ENCODE measurements at regions of chr1 and their contacts with region 1.

Region 1: DNA sequence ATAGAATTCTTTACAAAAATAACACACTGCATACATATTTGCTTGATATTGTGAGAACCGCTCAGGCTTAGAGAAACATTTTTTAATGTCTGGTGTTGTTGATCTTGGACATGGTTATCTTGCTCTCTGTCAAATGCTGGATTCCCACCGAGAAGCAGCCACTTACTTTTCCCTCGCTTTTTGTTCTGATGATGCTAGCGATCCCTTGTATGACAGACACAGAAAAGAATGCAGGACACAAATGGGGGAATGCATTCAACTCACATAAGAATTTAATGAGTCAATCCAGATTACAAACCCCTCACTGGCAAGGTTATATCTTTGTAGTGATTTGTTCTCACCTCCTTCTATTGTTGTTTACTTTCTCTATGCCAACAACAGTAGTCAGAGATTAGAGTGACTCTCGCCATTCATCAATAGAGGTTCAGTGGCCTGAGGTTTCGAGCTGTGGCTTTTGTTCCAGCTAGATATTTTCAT is 76.8 kb upstream of the AKT3 start:
- DNase-seq: peak; percentile 96
- ATAC-seq: peak; percentile 74
- H3K4me3 ChIP-seq: no peak overlapping the region
- H3K27ac ChIP-seq: no peak overlapping the region
- H3K4me1 ChIP-seq: peaks cover 14% of the 10 kb centered on the region
- H3K27me3 ChIP-seq: peaks cover 17% of the 10 kb centered on the region
- CTCF ChIP-seq: no peak
- POLR2A ChIP-seq: no peak
- RAD21 ChIP-seq: no peak

Region 2: DNA sequence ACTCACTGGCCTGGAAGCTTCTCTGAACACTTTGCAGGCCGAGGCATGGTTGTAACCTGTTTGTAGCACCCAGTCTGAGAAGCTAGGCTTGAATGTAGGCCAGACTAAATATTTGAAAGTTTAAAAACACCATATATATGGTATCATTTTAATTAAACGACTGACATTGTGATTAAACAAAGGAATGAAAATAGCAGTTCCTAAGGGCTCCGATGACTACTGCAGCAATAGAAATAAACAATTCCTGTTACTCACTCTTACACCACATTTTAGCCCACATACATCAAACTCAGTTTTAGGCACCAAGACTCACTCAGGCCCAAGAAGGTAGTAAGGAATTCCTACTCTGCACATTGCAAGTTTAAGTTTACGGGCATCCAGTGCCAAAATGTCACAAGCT is 358.0 kb before region 1 on chr1:
- CTCF ChIA-PET with region 1: no interaction called
- POLR2A ChIA-PET with region 1: interaction called, 26 read pairs
- dilution Hi-C with region 1: no loop called
- in situ Hi-C with region 1: no loop called
- intact Hi-C with region 1: no loop called
- DNase-seq: peak; percentile 90
- ATAC-seq: peak; percentile 96
- H3K4me3 ChIP-seq: no peak overlapping the region
- H3K27ac ChIP-seq: no peak overlapping the region
- H3K4me1 ChIP-seq: 0 out of 2 replicates have a peak, but pooled peaks cover 2% of the 10 kb centered on the region
- H3K27me3 ChIP-seq: no peaks in the 10 kb centered on the region
- CTCF ChIP-seq: no peak
- POLR2A ChIP-seq: no peak
- RAD21 ChIP-seq: no peak

Region 3: DNA sequence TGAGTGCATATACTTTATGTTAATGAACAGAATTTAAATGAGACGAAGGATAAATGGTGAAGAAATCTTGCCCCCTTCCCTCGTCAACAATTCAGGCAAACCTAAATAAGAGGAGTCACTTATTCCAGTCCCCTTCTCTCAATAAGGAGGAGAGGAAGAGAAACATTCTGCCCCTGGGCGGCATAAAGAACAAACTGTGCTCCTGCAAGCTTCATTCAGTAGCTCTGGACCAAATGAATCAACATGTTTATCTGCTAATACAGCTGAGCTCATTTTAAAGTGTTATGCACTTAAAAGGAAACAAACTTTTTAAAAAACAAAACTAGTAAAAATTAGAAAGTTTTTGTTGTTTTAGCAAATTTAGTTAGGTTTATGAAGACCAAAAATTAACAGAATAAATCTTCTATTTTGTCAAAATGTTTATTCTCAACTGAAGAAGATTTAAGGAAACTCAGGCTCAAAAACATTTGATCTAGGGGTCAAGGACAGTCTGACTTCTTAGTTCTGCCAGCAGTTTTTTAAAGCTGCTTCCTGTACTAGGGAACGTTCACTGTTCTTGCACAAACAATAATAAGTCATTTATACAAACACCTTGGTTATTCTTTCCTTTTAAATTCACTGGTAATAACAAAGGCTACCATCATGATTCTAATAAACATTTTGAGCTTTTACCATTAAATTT is 135.1 kb before region 1 on chr1:
- CTCF ChIA-PET with region 1: no interaction called
- POLR2A ChIA-PET with region 1: no interaction called
- dilution Hi-C with region 1: no loop called
- in situ Hi-C with region 1: no loop called
- intact Hi-C with region 1: no loop called
- DNase-seq: no peak
- ATAC-seq: no peak
- H3K4me3 ChIP-seq: no peak overlapping the region
- H3K27ac ChIP-seq: no peak overlapping the region
- H3K4me1 ChIP-seq: peaks cover 5% of the 10 kb centered on the region
- H3K27me3 ChIP-seq: no peaks in the 10 kb centered on the region
- CTCF ChIP-seq: no peak
- POLR2A ChIP-seq: no peak
- RAD21 ChIP-seq: no peak

Region 4: DNA sequence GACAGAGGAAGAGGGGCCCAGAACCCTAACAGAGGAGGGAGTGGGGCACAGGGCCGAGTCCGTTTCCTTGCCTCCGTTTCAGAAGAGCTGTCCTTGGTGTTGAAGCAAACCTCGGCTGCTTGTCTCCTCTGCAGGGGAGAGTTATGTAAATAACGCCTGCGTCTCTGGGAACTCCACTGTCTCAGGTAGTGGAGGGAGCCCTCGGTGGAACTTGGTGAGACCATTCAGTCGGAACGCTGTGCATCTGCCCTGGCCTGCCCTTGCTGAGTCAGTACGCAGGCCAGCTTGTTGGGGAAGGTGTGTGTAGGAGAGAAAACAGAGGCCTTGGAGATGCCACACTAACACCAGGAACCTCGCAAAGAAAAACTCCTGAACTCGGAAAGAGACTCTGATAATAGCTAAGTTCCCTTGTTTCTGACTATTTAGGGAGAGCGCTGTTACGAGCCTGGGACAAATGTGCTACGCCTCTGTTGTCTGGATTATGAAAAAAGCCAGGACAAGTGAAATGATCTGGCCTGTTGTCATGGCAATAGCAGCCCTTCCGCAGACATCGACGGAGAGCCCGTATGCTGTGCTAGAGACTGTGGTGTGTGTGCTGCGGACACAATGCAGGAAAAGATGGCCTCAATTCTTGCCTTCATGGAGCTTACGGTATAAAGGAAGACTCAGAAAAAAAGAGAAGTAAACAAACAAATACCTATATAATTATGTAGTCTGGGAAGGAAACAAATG is 17.8 kb after region 1 on chr1:
- CTCF ChIA-PET with region 1: no interaction called
- POLR2A ChIA-PET with region 1: no interaction called
- dilution Hi-C with region 1: no loop called
- in situ Hi-C with region 1: no loop called
- intact Hi-C with region 1: no loop called
- DNase-seq: peak; percentile 62
- ATAC-seq: peak; percentile 78
- H3K4me3 ChIP-seq: no peak overlapping the region
- H3K27ac ChIP-seq: no peak overlapping the region
- H3K4me1 ChIP-seq: no peaks in the 10 kb centered on the region
- H3K27me3 ChIP-seq: no peaks in the 10 kb centered on the region; the same call in 1 of the 2 replicates
- CTCF ChIP-seq: no peak
- POLR2A ChIP-seq: no peak
- RAD21 ChIP-seq: no peak

Region 5: GRCh38 chr1:245465666-245466065 is 1538.8 kb after region 1 on chr1:
- CTCF ChIA-PET with region 1: no interaction called
- POLR2A ChIA-PET with region 1: no interaction called
- dilution Hi-C with region 1: no loop called
- in situ Hi-C with region 1: no loop called
- intact Hi-C with region 1: loop called (anchors 10 kb)
- DNase-seq: no peak
- ATAC-seq: no peak
- H3K4me3 ChIP-seq: no peak overlapping the region
- H3K27ac ChIP-seq: no peak overlapping the region
- H3K4me1 ChIP-seq: no peaks in the 10 kb centered on the region
- H3K27me3 ChIP-seq: no peaks in the 10 kb centered on the region
- CTCF ChIP-seq: no peak
- POLR2A ChIP-seq: no peak
- RAD21 ChIP-seq: no peak

Measured in IMR-90 (cell line).